ENCODE measurements at regions of chr16 and their contacts with region 1.

Region 1: GRCh38 chr16:46673320-46674013 is 15.5 kb downstream of the VPS35 start:
- DNase-seq: peak; percentile 66
- H3K4me3 Mint-ChIP-seq: no peak overlapping the region
- H3K27ac Mint-ChIP-seq: no peak overlapping the region
- H3K4me1 Mint-ChIP-seq: no peaks in the 10 kb centered on the region
- H3K27me3 Mint-ChIP-seq: no peaks in the 10 kb centered on the region

Region 2: GRCh38 chr16:46658925-46659324 is 14.5 kb before region 1 on chr16:
- CTCF ChIA-PET with region 1: interaction called, 11 read pairs
- DNase-seq: no peak
- H3K4me3 Mint-ChIP-seq: no peak overlapping the region
- H3K27ac Mint-ChIP-seq: peak overlapping the region; percentile 38
- H3K4me1 Mint-ChIP-seq: peaks cover 7% of the 10 kb centered on the region
- H3K27me3 Mint-ChIP-seq: no peaks in the 10 kb centered on the region

Region 3: DNA sequence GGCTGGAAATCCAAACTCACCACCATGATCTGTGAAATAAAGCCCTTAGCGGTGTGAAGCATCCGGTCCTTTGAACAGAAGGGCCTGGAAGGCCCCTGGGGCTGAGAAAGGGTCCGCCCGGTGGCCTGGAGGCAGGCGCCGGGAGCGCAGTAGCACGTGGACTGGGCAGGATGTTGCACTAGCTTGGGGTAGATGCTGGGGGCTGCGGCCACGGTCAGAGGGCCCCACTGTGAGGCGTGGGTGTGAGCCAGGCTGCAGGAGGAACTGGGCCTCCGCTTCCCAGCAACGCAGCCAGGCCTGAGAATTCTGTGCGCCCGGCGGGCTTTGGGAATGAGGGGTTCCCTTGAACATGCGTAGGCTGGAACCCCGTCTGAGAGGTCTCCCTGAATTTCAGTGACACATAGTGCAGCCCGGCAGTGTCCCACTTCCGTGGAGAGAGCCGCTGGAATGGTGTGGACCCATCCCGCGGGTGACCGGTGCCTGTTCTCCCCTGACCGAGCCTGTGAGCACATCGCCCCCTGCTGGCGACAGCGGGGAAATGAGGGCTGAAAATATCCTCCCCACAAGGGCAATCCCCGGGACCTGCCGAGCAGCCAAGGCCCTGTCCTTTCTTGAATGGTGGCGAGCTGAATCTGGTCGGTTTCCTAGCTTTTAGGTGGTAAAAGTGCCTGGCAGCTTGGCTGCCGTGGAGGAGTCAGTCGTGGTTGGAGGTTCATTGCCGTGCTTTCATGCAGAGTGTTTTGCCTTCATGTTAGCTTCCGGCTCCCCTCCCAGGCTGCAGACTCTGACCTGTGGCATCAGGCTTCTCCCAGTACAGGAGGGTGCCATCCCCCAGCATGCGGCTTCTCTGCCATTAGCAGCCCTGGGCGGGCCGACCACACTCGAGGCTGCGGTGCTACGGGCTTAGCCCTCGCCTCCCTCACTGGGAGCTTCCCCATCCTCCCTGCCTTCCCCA is 256.2 kb after region 1 on chr16:
- CTCF ChIA-PET with region 1: interaction called, 16 read pairs
- DNase-seq: peak; percentile 76
- H3K4me3 Mint-ChIP-seq: no peak overlapping the region
- H3K27ac Mint-ChIP-seq: no peak overlapping the region
- H3K4me1 Mint-ChIP-seq: no peaks in the 10 kb centered on the region
- H3K27me3 Mint-ChIP-seq: no peaks in the 10 kb centered on the region

Measured in activated naive CD4-positive, alpha-beta T cell treated with anti-CD3 and anti-CD28 coated beads, Interleukin-2, amount 10 ng/mL, durations not matched to agents 7 days and 5 days (primary cell).